Dendritic cell treated with granulocyte-macrophage colony-stimulating factor and Interleukin-4, amounts not matched to agents 40 ng/mL and 50 ng/mL, for 4 days (primary cell): ENCODE measurements at regions of chr3 and their contacts with region 1.

Region 1: DNA sequence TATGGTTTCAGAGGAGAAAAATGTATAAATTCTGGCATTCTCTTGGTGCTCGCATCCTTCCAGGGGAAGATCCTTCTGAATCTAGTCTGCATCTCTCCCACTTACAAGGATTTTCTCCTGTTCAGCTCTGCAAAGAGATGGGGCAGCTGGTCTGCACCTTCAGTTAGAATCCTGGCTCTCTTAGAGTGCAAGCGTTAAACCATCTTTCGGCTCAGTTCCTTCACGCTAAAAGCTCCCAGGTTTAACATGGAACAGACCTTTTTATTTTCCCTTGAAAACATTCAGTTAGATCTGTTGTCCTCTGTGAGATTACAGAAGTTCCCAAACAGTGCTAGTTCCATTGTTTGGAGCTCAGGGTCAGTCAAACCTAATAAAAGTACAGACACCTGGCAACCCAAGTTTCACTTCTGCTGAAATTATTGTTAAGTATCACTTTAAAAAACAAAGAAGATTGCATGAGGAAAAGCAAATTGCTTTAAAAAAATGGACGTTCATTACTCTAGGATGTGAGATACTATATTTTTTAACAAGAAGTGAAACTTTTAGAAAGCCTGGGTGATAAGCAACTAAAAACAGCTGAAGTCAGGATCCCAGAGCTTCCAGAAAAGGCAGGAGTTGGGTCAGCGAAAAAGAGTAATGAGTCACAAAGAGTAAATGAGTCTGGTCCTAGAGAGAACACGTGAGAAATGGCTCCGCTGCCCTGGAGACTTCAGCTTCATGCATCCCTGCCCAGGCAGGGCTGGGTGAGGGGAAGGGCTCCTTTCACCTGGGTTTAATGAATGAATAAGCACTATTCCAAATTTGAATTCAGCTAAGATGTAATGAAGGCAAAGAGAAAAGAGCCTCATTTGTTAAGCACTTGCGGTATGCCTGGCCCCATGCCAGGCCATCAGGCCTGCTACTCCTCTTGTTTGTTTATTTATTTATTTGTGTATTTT is 63.3 kb downstream of the ABTB1 start:
- H3K4me3 Mint-ChIP-seq: peak overlapping the region; percentile 23
- H3K27ac Mint-ChIP-seq: peak overlapping the region; percentile 81
- H3K4me1 Mint-ChIP-seq: peaks cover 69% of the 10 kb centered on the region
- H3K27me3 Mint-ChIP-seq: peaks cover 2% of the 10 kb centered on the region

Region 2: DNA sequence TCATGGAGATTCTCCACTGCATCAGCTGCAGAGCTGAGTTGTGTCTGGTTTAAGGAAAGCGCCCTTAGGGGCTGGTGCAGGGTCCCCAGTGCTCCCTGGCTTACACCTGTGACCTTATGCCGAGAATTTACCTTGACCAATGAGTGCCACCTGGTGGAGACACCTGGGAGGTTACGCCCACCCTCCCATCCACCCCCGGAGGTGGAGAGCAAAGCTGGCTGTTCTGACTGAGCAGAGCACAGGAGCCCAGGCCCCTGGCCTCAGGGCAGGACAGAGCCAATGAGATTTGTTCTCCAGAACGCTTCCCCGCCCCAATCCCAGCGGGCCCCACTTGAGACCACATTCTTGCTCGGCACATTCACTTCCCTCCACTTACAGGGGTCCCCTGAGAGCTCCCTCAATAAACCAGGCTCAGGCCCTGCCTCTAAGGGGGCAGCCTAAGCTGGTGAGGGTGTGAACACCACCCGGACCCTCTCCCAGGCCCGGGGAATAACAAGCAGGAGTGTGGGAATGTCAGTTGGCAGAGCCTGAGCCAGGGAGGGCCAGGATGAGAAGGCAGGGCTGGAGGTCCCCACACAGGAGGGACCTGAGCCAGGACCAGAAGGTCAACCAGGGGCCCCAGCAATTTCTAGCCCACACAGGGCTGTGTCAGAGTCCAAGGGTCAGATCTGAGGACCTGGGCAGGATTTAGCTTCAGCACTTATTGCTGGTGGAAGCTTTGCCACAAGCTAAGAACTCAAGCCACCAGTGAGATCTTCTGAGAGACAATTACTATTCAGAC is 262.6 kb before region 1 on chr3:
- intact Hi-C with region 1: no loop called
- H3K4me3 Mint-ChIP-seq: no peak overlapping the region
- H3K27ac Mint-ChIP-seq: no peak overlapping the region
- H3K4me1 Mint-ChIP-seq: peaks cover 5% of the 10 kb centered on the region
- H3K27me3 Mint-ChIP-seq: peaks cover 11% of the 10 kb centered on the region

Region 3: DNA sequence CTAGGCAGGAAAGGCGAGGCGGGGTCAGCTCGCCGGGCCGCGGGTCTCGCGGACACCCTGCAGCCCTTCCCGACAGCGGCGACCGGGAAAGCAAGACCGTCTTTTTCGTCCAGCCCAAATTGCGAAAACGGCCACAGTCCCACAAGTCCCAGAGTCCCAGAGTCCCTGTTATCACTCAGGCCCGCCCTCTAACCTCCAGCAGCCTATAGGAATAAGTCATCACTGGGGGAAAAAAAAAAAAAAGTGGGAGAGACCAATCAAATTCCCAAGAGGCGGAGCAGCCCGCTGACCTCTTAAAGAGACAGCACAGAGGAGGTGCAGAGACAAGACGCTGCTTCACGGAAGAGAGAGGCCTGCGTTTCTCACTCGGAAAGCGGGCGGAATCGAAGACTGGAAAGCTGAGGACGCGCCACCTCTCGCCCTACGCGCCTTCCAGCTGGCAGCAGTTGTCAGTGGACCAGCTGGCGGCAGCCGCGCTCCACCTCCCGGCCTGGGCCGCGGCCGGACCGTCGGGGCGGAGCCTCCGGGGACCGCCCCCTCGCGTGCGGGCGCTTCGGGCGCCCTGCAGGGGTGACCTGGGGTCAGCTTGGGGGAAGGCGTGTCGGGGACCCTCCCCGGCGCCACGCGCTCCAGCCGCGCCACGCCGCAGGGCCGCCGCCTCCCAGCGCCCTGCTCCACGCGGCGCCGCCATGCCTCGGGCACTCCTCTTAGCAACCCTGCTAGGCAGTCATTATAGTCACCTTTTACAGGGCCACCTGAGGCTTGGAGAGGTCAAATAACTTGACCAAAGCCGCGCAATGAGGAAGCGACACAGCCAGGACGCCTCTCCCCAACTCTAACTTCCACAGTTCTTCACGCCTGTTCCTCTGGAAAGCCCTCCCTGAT is 145.2 kb before region 1 on chr3 and contains the start of gene TPRA1:
- intact Hi-C with region 1: loop called (anchors 2 kb)
- H3K4me3 Mint-ChIP-seq: peak within 1 kb of the TSS; percentile 87
- H3K27ac Mint-ChIP-seq: peak within 1 kb of the TSS; percentile 98
- H3K4me1 Mint-ChIP-seq: peaks cover 54% of the 10 kb centered on the region
- H3K27me3 Mint-ChIP-seq: no peaks in the 10 kb centered on the region

Region 4: DNA sequence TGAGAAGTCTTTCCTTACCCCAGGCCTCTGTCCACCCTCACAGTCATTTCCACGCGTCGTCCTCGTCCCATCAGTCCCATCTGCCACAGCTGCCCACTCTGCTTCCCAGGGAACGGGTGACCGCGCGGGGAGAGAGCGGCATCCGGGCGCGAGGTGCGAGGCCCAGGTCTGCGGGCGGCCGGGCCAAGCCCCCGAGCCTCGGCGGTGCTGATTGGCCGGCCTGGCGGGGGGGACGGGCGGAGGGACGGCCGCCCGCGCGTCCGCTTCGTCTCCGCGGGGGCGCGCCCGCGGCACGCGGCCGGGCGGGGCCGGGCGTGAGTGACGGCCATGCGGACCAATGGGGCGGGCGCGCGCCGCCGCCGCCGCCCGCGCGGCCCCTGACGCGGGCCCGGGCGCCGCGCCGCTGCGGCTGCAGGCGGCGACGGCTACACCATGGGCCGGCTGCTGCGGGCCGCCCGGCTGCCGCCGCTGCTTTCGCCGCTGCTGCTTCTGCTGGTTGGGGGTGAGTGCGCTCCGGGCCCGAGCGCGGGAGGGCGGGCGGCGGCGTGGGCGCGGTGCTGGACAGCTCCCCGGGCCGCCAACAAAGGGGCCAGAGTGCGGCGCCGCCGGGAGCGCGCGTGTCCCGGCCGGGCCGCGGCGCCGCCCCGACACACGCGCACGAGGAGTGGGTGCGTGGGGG is 107.1 kb before region 1 on chr3 and contains the start of gene PODXL2:
- intact Hi-C with region 1: no loop called
- H3K4me3 Mint-ChIP-seq: peak within 1 kb of the TSS; percentile 77
- H3K27ac Mint-ChIP-seq: no peak within 1 kb of the TSS
- H3K4me1 Mint-ChIP-seq: peaks cover 19% of the 10 kb centered on the region
- H3K27me3 Mint-ChIP-seq: peaks cover 53% of the 10 kb centered on the region

Region 5: GRCh38 chr3:127723011-127723567 is 12.9 kb before region 1 on chr3:
- intact Hi-C with region 1: no loop called
- H3K4me3 Mint-ChIP-seq: no peak overlapping the region
- H3K27ac Mint-ChIP-seq: no peak overlapping the region
- H3K4me1 Mint-ChIP-seq: peaks cover 31% of the 10 kb centered on the region
- H3K27me3 Mint-ChIP-seq: peaks cover 2% of the 10 kb centered on the region

Region 6: DNA sequence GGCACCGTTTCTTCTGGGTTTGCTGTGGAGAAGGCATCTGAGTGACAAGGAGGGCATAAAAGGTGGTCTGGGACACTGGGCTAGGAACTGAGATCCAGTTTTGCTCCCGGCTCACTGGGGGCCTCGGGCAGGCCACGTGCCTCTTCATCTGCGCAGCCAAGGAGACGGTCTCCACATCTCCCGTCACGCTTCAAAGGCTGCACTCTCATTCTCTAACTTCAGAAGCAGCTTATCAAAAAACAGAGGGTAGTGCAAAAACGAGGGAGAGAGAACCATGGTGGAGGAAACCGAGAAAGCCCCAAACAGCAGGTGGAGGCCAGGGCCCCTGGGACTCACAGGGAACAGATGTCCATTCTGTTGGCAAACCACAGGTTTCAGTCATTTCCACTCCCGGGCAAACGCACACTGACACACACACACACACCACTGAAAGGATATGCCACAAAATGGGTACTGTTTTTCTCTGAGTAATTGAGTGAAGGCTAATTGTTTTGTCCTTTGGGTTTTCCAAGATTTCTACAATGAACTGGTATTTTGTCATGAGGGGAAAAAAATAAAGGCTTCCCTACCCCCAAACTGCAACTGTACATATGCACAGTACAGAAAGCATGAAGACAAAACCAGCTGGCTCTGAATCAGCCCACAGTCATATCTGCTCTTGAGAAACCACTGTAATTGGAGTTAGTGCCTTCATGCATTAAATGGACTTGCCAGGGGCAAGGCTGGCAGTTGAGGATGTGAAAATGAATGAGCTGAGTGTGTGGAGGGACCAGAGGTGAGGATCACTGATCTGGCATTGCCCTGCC is 14.4 kb after region 1 on chr3:
- intact Hi-C with region 1: loop called (anchors 1 kb)
- H3K4me3 Mint-ChIP-seq: no peak overlapping the region
- H3K27ac Mint-ChIP-seq: peak overlapping the region; percentile 57
- H3K4me1 Mint-ChIP-seq: peaks cover 79% of the 10 kb centered on the region
- H3K27me3 Mint-ChIP-seq: peaks cover 49% of the 10 kb centered on the region